BJ (cell line): ENCODE measurements at regions of chr5 and their contacts with region 1.

Region 1: DNA sequence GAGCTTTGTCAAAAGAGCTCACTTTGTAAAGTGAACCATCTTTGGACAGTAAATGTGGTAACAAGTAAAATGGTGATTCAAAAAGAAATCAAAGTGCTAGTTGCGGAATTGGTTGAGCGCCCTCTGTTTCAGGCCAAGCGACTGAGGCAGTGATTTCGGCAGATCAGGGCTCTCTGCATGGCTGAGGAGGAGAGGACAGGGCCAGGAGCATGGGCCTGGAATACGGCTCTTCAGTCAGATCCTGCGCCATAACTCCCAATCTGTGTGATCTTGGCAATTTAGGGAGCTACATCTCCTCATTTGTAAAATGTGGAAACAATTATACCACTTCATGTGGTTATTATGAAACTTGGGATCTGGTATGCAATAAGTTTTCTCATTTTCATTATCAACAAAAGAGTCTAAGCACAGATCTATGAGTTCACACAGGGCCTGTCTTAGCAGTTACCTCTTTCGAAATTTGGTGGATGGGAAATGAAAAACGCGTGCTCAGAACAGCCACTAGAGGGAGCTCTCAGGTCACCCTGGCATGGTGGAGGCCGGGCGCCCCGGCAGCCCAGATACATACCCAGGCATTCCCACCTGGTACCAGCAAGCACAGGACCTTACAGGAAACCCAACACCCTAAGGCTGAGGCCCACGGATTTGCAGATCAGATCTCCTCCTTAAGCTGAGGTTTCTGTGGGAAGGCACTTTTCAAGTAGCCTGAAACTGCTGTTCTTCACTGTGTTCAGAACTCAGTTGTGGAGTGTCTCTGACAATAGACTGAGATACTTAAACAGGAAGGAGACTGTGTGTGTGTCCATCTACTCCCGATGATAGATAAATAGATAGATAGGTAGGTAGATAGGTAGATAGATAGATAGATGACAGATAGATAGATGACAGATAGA is 303.7 kb downstream of the RAB3C start:
- DNase-seq: peak; percentile 2
- H3K4me3 ChIP-seq: no peak overlapping the region
- H3K27me3 ChIP-seq: no peaks in the 10 kb centered on the region
- CTCF ChIP-seq: peak; percentile 95

Region 2: GRCh38 chr5:58751222-58751837 is 135.2 kb before region 1 on chr5:
- CTCF ChIA-PET with region 1: no interaction called
- POLR2A ChIA-PET with region 1: no interaction called
- DNase-seq: no peak
- H3K4me3 ChIP-seq: no peak overlapping the region
- H3K27me3 ChIP-seq: no peaks in the 10 kb centered on the region
- CTCF ChIP-seq: no peak

Region 3: DNA sequence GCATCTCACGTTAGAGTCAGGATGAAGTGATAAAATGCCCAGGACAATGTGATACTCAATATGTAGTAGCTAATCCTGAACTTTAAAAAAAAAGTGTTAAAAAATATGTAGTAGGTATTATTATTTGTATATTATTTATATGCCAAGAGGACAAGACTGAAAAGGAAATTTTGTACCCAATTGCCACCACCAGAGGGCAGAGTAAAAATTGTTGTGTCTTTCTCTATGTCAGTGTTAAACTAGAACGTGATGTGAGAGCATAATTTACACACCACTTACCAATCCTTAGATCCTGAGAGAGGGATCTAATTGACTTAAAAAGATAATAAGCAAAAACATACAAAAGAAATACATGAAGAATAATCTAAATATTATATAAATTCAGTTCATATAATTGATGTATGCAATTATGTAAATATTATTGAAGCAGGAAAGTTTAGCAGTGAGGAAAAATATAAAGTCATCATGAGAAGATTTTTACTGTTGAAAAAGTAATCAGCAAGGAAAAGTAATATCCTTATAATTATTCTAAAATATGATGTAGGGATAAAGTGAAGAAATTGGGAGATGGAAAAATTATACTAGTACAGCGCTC is 14.8 kb before region 1 on chr5:
- CTCF ChIA-PET with region 1: interaction called, 14 read pairs
- POLR2A ChIA-PET with region 1: no interaction called
- DNase-seq: no peak
- H3K4me3 ChIP-seq: no peak overlapping the region
- H3K27me3 ChIP-seq: 0 out of 2 replicates have a peak, but pooled peaks cover 2% of the 10 kb centered on the region
- CTCF ChIP-seq: peak; percentile 68

Region 4: DNA sequence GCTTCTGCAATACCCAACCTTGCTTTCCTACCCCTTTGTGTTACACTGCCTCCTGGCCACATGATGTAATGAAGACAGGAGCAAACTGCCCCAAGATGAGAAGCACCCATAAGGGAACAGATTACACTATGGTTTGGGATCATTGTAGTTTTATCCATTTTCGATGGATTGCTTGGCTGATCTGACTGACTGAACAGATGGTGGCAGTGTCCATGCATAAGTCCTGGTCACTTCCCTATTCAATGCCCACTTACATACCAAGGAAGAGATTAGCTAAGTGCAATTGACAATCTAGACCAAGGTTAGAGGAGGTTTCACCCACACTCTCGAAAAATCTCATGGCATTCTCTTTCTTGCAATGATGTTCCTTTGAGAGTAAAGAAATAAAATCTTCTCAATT is 16.2 kb after region 1 on chr5:
- CTCF ChIA-PET with region 1: interaction called, 11 read pairs
- POLR2A ChIA-PET with region 1: no interaction called
- DNase-seq: no peak
- H3K4me3 ChIP-seq: no peak overlapping the region
- H3K27me3 ChIP-seq: peaks cover 2% of the 10 kb centered on the region; the same call in 1 of the 2 replicates
- CTCF ChIP-seq: no peak

Region 5: GRCh38 chr5:59001154-59001553 is 114.6 kb after region 1 on chr5:
- CTCF ChIA-PET with region 1: interaction called, 41 read pairs
- POLR2A ChIA-PET with region 1: no interaction called
- DNase-seq: no peak
- H3K4me3 ChIP-seq: no peak overlapping the region
- H3K27me3 ChIP-seq: no peaks in the 10 kb centered on the region
- CTCF ChIP-seq: no peak

Region 6: GRCh38 chr5:59007460-59008063 is 121.0 kb after region 1 on chr5:
- CTCF ChIA-PET with region 1: interaction called, 41 read pairs
- POLR2A ChIA-PET with region 1: no interaction called
- DNase-seq: no peak
- H3K4me3 ChIP-seq: no peak overlapping the region
- H3K27me3 ChIP-seq: no peaks in the 10 kb centered on the region
- CTCF ChIP-seq: peak; percentile 42

Region 7: DNA sequence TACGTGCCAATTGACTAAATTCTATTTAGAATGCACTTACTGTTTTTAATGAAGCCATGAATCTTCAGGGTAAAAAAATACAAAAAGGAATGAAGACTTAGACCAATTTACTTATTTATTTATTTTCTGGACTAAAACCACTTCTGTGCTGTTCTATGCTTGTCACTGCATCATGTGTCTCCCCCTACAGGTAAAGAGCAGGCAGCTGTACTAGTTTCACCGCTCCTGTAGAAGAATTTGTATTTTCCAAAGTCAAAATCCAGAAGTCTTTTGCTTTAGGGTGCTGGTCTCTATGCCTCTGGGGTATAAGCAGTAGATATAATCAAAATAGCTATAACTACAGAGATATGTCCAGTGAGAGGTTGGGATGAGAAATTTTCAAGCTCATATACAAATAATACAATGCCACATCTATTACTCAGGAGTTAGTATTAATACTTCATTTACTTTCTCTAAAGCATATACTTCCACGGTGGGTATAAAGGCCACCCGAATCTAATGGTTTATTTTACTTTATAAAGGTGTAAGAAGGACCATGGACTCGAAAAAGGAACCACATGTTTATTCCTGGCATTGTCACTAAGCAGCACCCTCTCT is 287.8 kb after region 1 on chr5:
- CTCF ChIA-PET with region 1: interaction called, 58 read pairs
- POLR2A ChIA-PET with region 1: no interaction called
- DNase-seq: no peak
- H3K4me3 ChIP-seq: no peak overlapping the region
- H3K27me3 ChIP-seq: no peaks in the 10 kb centered on the region
- CTCF ChIP-seq: peak; percentile 89